Head of caudate nucleus (tissue), 42 donors: ENCODE measurements at regions of chr2 and their contacts with region 1.

Region 1: DNA sequence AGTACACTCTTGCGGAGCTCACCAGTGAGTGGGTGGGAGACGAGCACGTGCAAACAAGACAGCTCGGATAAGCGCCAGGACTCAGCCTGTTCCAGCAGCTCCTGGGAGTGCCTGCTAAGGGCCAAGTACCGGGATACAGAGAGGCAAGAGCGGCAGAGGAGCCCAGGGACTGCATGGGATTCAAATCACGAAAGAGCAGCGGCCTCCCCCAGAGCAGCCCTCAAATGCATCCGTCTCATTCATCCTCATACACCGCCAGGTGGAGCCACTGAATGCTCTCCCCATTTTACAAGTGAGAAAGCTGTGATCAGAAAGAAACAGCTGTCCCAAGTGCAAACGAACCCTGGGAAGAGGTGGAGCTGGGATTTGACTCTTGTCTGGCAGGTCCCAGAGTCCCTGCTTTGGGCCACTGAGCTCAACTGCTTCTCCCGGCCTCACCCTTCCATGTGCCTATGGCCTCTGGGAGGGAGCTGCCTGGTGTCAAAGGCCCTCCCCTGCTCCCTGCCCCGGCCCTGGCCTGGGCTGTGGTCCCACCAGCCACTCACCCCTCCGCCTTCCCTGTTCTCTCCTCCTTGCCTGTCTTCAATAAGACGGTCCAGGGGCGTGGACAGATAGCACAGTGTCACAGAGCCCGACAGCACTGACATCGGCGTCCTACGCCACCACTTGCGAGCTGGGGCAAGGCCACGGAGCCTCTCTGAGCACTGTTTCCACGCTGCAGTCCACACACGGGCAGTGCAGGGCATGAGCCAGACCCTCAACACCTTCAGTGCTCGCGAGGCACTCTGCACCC is 72.8 kb upstream of the TAF1B start:
- DNase-seq: peak; percentile 51 to 90 (median 77)

Region 2: GRCh38 chr2:9656270-9656766 is 114.2 kb before region 1 on chr2:
- intact Hi-C with region 1: loop called (anchors 10 kb)
- DNase-seq: peak in 1 of 42 donors; percentile 27